Left lung (tissue), 14 donors: ENCODE measurements at regions of chr6 and their contacts with region 1.

Region 1: DNA sequence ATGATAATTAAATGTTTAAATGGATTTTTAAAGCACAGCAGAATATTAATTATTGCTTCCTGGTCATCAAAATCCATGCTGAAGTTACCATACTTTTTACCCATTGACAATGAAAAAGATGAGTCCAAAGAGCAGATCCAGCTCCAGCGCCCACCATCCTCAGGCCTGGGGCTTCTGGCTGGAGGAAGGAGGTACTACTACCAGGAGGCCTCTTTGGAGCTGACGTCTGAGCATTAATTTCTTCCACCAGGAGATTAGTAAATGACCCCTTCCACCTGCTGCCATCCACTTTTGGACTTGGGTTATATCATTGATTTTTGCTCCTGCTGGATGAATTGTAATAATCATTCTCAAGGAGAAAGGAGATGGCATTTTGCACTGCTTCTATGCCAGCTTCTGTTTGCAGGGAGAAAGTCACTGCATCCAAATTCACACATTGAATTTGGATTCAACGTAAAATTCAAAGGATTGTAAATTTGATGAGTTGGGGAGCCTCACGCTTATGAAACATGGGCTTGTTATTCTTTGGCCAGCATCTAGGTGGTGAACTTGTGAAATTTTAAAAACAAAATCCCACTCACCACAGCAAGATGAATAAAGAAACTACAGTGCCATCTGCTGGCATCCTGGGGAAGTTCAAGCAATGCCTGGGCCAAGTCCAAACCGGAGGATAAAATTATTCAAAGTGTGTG is 121.8 kb downstream of the SASH1 start:
- DNase-seq: peak in 2 of 4 donors; percentile 73 to 83
- ATAC-seq: peak; percentile 87
- H3K4me3 ChIP-seq: no peak overlapping the region
- H3K27ac ChIP-seq: peak overlapping the region in 1 of 2 donors; percentile 31
- H3K4me1 ChIP-seq: peaks cover 11 to 45% of the 10 kb centered on the region in 2 donors
- H3K27me3 ChIP-seq: no peaks in the 10 kb centered on the region
- CTCF ChIP-seq: peak; percentile 93

Region 2: DNA sequence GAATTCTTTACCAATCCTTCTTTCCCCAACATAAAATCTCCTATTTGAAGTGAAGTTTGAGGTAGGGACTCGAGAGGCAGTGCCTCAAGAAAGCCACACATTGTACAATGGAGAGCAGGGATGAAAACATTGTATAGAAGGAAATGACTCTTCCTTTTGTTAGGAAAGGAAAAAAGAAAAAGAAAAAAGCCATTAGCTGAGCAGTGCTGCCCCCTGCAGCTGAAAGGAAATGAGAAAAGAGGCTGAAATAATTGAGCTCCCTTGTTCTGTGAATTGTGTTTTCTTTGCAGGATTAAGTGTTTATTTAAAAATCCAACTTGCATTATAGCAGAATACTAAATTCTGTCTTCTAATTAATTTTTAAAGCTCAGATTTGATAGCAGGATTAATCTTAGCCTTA is 284.7 kb before region 1 on chr6:
- intact Hi-C with region 1: loop called in 1 of 2 experiments (anchors 5 kb)
- DNase-seq: no peak
- ATAC-seq: peak; percentile 49
- H3K4me3 ChIP-seq: no peak overlapping the region
- H3K27ac ChIP-seq: no peak overlapping the region
- H3K4me1 ChIP-seq: no peaks in the 10 kb centered on the region
- H3K27me3 ChIP-seq: no peaks in the 10 kb centered on the region
- CTCF ChIP-seq: peak; percentile 29 to 34